Activated T-helper 1 cell treated with anti-CD3 and anti-CD28 coated beads, Interleukin-12 subunit alpha, Interleukin-12 subunit beta, Interleukin-2, Interleukin-4 antibody, amounts not matched to agents 30 ng/mL and 10 ng/mL and 1 ng/mL, durations not matched to agents 14 hours and 24 hours and 36 hours (primary cell): ENCODE measurements at regions of chr14 and their contacts with region 1.

Region 1: GRCh38 chr14:73886449-73887317 is at the start of gene ZNF410:
- DNase-seq: peak; percentile 85
- H3K4me3 Mint-ChIP-seq: peak within 1 kb of the TSS; percentile 93
- H3K27ac Mint-ChIP-seq: peak within 1 kb of the TSS; percentile 98
- H3K4me1 Mint-ChIP-seq: peaks cover 54% of the 10 kb centered on the region
- H3K27me3 Mint-ChIP-seq: no peaks in the 10 kb centered on the region
- total RNA-seq, gene ZNF410: 70.1 and 71.8 TPM in 2 replicates

Region 2: GRCh38 chr14:73026845-73027542 is 859.7 kb before region 1 on chr14 and contains the start of gene ZFYVE1:
- intact Hi-C with region 1: loop called (anchors 1 kb)
- DNase-seq: peak; percentile 90
- H3K4me3 Mint-ChIP-seq: peak within 1 kb of the TSS; percentile 97
- H3K27ac Mint-ChIP-seq: peak within 1 kb of the TSS; percentile 94
- H3K4me1 Mint-ChIP-seq: peaks cover 44% of the 10 kb centered on the region
- H3K27me3 Mint-ChIP-seq: peaks cover 1% of the 10 kb centered on the region
- total RNA-seq, gene ZFYVE1: 7.1 and 7.6 TPM in 2 replicates

Region 3: GRCh38 chr14:73568381-73568781 is 318.3 kb before region 1 on chr14:
- intact Hi-C with region 1: loop called (anchors 5 kb)
- DNase-seq: no peak
- H3K4me3 Mint-ChIP-seq: peak overlapping the region; percentile 92
- H3K27ac Mint-ChIP-seq: peak overlapping the region; percentile 97
- H3K4me1 Mint-ChIP-seq: peaks cover 39% of the 10 kb centered on the region
- H3K27me3 Mint-ChIP-seq: no peaks in the 10 kb centered on the region

Region 4: GRCh38 chr14:73696466-73697400 is 189.9 kb before region 1 on chr14:
- intact Hi-C with region 1: no loop called
- DNase-seq: no peak
- H3K4me3 Mint-ChIP-seq: peak overlapping the region; percentile 64
- H3K27ac Mint-ChIP-seq: peak overlapping the region; percentile 78
- H3K4me1 Mint-ChIP-seq: peaks cover 41% of the 10 kb centered on the region
- H3K27me3 Mint-ChIP-seq: no peaks in the 10 kb centered on the region

Region 5: GRCh38 chr14:73728717-73729330 is 157.9 kb before region 1 on chr14:
- intact Hi-C with region 1: loop called (anchors 1 kb)
- DNase-seq: peak; percentile 77
- H3K4me3 Mint-ChIP-seq: no peak overlapping the region
- H3K27ac Mint-ChIP-seq: peak overlapping the region; percentile 78
- H3K4me1 Mint-ChIP-seq: peaks cover 30% of the 10 kb centered on the region
- H3K27me3 Mint-ChIP-seq: no peaks in the 10 kb centered on the region

Region 6: GRCh38 chr14:73785873-73786695 is 100.6 kb before region 1 on chr14:
- intact Hi-C with region 1: loop called (anchors 1 kb)
- DNase-seq: peak; percentile 63
- H3K4me3 Mint-ChIP-seq: peak overlapping the region; percentile 92
- H3K27ac Mint-ChIP-seq: peak overlapping the region; percentile 96
- H3K4me1 Mint-ChIP-seq: peaks cover 64% of the 10 kb centered on the region
- H3K27me3 Mint-ChIP-seq: no peaks in the 10 kb centered on the region

Region 7: DNA sequence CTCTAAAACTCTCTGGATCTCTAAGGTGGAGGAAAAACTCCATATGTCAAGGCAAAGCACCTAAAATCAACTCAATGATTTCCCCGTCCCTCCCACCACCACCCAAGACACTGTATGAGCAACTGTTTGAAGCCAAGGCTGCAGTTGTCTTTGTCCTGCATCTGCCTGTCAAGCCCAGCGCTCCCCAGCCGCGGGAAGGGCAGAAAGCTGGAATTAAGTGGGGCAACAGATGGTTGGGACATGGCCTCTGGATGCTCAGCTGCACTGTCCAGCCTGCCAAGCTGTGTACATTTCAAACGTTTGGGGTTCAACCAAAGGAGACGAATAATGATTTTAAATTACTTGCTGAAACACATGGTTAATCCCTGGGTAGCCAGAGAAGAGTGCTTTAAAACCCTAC is 77.3 kb before region 1 on chr14:
- intact Hi-C with region 1: no loop called
- DNase-seq: no peak
- H3K4me3 Mint-ChIP-seq: no peak overlapping the region
- H3K27ac Mint-ChIP-seq: no peak overlapping the region
- H3K4me1 Mint-ChIP-seq: peaks cover 9% of the 10 kb centered on the region
- H3K27me3 Mint-ChIP-seq: no peaks in the 10 kb centered on the region

Region 8: DNA sequence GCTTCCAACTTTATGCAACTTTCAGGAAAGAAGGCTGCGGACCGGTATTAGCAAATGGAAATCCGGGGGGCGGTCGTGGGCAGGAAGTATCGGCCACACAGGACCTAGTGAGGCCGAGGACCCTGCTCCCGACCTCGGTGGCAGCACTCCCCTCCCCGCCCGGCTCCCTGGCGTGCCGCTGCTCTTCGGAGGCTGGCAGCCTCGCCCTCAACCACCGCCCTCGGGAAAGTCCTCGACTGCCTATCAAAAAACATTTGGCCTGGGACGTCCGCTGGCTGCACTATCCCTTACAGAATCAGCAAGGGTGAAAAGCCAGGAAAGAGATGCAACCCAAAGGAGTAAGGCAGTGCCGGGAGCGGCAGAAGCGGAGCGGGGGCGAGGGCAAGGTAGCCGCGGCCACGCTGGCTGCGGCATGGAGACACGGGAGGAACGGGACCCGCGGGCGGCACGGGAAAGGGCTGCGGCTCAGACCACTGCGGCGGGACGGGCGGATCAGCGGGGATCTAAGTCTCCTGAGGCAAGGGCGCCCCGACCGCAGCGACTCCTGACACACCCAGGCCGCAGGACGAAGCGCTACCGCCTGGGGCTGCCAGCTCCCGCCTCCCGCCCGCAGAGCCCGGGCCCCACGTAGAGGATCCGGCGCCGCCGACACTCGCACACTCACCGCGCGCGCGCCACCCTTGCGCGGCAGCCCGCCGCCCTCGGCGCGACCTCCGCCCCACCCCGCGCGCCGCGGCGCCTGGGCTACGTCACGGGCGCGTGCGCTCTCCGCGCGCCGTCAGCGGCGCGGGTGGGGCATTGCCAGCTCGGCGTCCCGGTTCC is 132.1 kb after region 1 on chr14 and contains the starts of genes BBOF1 and ENTPD5:
- intact Hi-C with region 1: loop called (anchors 1 kb)
- DNase-seq: peak; percentile 85
- H3K4me3 Mint-ChIP-seq: peak within 1 kb of the TSS; percentile 95
- H3K27ac Mint-ChIP-seq: peak within 1 kb of the TSS; percentile 97
- H3K4me1 Mint-ChIP-seq: peaks cover 17% of the 10 kb centered on the region
- H3K27me3 Mint-ChIP-seq: peaks cover 3% of the 10 kb centered on the region
- total RNA-seq, gene BBOF1: 0.51 and 0.88 TPM in 2 replicates
- total RNA-seq, gene ENTPD5: 10.7 and 12.2 TPM in 2 replicates